Activated T-helper 1 cell treated with anti-CD3 and anti-CD28 coated beads, Interleukin-12 subunit alpha, Interleukin-12 subunit beta, Interleukin-2, Interleukin-4 antibody, amounts not matched to agents 30 ng/mL and 10 ng/mL and 1 ng/mL, durations not matched to agents 14 hours and 24 hours and 36 hours (primary cell): ENCODE measurements at regions of chr2 and their contacts with region 1.

Region 1: DNA sequence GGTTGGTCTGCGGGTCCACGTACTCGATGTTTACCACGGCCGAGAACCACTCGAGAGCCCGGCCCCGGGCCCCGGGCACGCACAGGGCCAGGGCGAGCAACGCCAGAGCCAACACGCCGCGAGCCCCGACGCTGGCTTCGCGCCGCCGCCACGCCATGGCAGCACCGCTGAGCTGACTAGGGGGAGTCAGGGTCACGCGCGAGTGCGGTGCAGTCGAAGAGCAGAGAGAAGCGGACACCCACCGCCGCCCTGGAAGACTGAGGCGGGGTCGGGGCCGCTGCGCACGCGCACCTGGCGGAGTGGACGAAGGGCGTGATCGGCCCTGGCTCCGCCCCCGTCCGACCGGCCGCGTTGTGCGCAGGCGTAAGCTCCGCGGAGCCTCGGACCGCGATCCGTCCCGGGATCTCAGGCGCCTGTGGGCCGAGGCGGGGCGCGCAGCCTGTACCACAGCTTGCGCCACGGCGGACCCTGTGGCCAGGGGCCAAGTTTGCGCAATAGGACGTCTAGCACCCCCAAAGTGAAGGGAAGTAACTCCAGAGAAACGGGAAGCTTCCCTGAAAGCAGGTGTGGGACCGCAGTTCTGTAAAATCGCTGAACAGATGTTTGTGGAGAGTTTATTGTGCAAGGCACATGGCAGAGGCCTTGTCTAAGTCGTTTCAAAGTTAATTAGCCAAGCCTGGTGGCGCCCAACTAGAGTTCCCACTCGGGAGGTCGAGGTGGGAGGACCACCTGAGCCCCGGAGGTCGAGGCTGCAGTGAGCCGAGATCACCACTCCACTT is at the start of gene RNF149:
- DNase-seq: peak; percentile 91
- H3K4me3 Mint-ChIP-seq: peak within 1 kb of the TSS; percentile 92
- H3K27ac Mint-ChIP-seq: peak within 1 kb of the TSS; percentile 96
- H3K4me1 Mint-ChIP-seq: peaks cover 65% of the 10 kb centered on the region
- H3K27me3 Mint-ChIP-seq: peaks cover 2% of the 10 kb centered on the region
- total RNA-seq, gene RNF149: 54.8 and 55.9 TPM in 2 replicates

Region 2: DNA sequence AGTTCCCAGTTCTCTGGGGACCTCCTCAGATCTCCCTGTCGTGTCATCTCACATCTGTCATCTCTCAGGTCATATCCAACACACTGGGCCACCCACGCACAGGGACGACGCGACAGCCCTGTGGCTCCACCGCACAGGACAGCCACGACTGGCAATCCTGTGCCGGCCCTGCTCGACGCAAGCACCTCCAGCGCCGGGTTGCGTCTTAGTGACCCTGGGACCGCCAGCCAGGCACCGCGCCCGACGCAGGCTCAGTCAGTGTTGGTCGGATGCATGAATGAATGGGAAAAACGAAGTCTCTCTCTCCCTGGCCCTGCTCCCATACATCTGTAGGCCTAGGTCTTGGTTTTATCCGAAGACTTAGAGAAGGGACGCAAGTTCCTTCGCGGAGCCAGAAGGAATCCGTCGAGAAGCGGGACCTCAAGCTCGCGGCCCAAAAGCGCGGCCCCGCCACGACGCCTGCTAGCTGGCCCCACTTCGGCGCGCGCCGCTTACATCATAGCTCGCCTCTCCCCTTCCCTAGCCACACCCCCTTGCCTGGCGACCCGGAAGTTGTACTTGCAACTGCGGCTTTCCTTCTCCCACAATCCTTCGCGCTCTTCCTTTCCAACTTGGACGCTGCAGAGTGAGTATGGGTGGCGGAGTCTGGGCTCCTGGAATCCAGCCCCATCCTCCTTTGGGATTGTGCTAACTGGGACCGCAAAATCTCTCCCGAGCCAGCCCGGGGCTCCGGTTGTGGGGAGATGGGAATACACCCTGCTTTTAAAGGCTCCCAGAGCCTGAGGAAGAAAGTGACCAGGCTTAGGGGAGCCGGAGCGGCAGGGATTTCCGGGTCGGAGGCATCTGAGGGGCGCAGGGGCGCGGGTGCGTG is 306.7 kb before region 1 on chr2 and contains the start of gene RPL31:
- intact Hi-C with region 1: loop called (anchors 2 kb)
- DNase-seq: peak; percentile 95
- H3K4me3 Mint-ChIP-seq: peak within 1 kb of the TSS; percentile 100
- H3K27ac Mint-ChIP-seq: peak within 1 kb of the TSS; percentile 95
- H3K4me1 Mint-ChIP-seq: peaks cover 46% of the 10 kb centered on the region
- H3K27me3 Mint-ChIP-seq: peaks cover 6% of the 10 kb centered on the region
- total RNA-seq, gene RPL31: 1,048 and 1,092 TPM in 2 replicates

Region 3: DNA sequence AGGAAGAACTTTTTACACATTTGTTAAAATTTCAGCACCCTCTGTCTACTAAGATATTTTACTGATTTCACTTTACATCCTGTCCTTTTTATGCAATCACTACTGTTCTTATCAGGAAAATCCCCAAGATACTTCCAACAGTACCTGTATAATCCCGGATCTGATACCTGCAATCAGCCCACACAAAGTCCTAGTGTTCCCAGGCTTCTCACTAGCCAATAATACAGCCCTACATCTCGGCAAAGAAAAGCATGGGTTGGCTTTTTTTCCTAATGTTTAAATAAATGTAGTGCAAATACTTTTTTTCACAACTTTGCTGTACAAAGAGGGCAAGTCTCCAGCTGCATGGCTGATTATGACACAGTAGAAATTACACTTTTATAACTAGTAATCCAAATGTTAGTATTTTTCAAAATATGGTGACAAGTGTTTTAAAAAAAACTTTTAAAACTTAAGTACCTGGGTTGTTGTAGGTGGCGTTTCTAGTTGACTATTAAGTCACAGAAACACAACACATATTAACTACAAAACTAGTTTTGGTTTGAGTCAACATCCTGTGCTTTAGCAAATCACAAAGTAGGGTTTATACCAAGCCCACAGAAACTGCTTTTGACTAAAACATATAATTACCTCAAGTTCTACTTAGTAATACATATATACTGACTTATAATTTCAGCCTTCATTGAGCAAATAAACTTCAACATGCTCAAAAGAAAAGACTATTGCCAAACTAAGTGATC is 36.4 kb before region 1 on chr2:
- intact Hi-C with region 1: loop called (anchors 1 kb)
- DNase-seq: no peak
- H3K4me3 Mint-ChIP-seq: peak overlapping the region; percentile 59
- H3K27ac Mint-ChIP-seq: peak overlapping the region; percentile 81
- H3K4me1 Mint-ChIP-seq: peaks cover 48% of the 10 kb centered on the region
- H3K27me3 Mint-ChIP-seq: no peaks in the 10 kb centered on the region

Region 4: GRCh38 chr2:101341901-101342624 is 33.4 kb after region 1 on chr2:
- intact Hi-C with region 1: loop called (anchors 1 kb)
- DNase-seq: peak; percentile 46
- H3K4me3 Mint-ChIP-seq: no peak overlapping the region
- H3K27ac Mint-ChIP-seq: no peak overlapping the region
- H3K4me1 Mint-ChIP-seq: peaks cover 33% of the 10 kb centered on the region
- H3K27me3 Mint-ChIP-seq: peaks cover 18% of the 10 kb centered on the region

Region 5: DNA sequence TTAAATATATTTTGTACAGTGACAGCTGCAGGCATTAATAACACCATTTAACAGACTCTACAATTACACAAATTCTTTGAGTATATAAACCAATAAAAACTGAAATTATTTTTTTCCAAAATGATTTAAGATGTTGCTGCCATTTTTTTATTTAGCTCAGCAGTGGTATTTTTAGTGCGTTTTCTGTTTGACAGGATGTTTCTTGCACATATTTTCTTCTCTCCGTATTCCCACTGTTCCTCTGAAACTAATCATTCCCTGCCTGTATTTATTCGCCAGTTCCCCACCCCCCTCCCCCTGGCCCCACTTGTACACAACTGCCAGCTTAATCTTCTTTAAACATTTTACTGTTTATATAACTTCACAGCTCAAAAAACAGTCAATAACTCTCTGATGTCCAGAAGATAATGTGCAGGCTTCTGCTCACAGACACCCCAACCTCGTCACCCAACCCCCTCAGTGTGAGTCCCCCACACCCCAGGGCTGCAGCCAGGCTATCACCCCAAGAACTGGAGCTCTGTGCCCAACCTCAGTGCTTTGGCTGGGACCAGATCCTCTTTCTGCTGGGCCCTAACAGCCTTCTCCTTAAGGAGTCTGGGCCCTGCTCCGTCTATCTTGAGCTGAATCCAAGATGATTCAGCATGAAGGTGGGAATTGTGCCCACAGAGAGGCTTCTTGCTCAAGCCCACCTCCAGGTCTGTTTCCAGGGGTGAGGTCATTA is 347.2 kb after region 1 on chr2:
- intact Hi-C with region 1: loop called (anchors 2 kb)
- DNase-seq: no peak
- H3K4me3 Mint-ChIP-seq: no peak overlapping the region
- H3K27ac Mint-ChIP-seq: no peak overlapping the region
- H3K4me1 Mint-ChIP-seq: peaks cover 18% of the 10 kb centered on the region
- H3K27me3 Mint-ChIP-seq: no peaks in the 10 kb centered on the region

Region 6: DNA sequence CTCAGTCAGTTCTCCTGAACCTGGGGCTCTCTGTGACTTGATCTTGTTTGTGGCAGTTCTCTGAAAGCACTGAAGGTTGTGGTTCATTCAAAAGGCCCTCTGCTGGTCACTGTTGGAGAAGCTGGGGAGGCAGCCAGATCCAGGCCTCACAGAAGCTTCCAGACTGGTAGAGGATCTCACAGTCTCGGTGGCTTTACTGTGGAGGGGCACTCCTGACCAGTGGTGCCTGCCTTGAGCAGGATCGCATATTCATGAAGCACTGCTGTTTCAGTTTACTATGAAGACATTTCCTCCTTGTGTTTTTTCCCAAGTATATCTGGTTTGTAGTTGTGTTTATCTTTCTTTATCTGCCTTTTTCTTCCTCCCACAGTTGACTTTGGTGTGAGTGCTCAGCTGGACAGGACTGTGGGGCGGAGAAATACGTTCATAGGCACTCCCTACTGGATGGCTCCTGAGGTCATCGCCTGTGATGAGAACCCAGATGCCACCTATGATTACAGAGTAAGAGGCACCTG is 522.8 kb after region 1 on chr2:
- intact Hi-C with region 1: loop called (anchors 1 kb)
- DNase-seq: peak; percentile 46
- H3K4me3 Mint-ChIP-seq: peak overlapping the region; percentile 32
- H3K27ac Mint-ChIP-seq: peak overlapping the region; percentile 92
- H3K4me1 Mint-ChIP-seq: peaks cover 54% of the 10 kb centered on the region
- H3K27me3 Mint-ChIP-seq: no peaks in the 10 kb centered on the region